ENCODE measurements at regions of chr1 and their contacts with region 1.

Region 1: GRCh38 chr1:76330991-76331603 is 256.6 kb downstream of the ST6GALNAC3 start:
- DNase-seq: peak; percentile 28
- CTCF ChIP-seq: peak; percentile 86

Region 2: GRCh38 chr1:75937034-75937433 is 394.1 kb before region 1 on chr1:
- CTCF ChIA-PET with region 1: no interaction called
- POLR2A ChIA-PET with region 1: no interaction called
- DNase-seq: no peak
- CTCF ChIP-seq: no peak

Region 3: DNA sequence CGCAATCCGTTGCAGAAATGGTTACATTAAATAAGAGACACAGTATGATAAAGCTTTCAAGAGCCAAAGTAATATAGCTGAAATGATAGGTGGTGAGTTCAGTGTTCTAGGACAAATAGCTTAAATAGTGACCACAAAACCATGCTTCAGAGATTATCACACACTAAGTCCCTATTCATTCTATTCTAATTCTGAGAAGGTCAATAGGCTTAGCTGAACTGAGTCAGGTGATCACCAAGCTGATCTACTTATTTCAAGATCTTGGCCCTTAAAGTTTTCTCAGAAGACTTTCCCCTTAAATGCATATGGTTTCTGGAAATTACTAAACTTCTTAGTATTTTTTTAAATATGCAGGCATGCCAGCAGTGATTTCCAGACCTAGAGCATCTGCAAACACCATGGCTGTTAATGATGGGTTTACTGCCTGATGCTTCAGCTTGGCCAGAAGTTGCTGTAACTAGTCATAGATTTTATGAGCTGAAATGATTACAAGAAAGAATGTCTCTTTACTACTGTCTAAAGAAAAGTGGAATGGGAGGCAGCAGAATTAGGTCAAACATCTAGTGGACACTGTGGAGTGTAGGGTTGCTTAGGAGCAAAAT is 13.7 kb before region 1 on chr1:
- CTCF ChIA-PET with region 1: interaction called, 17 read pairs
- POLR2A ChIA-PET with region 1: no interaction called
- DNase-seq: no peak
- CTCF ChIP-seq: no peak